WTC11 (cell line): ENCODE measurements at regions of chr10 and their contacts with region 1.

Region 1: GRCh38 chr10:12348870-12349628 is at the start of gene CAMK1D:
- DNase-seq: peak; percentile 84
- ATAC-seq: peak; percentile 57
- H3K4me3 Mint-ChIP-seq: peak within 1 kb of the TSS; percentile 99
- H3K27ac Mint-ChIP-seq: peak within 1 kb of the TSS; percentile 96
- H3K4me1 Mint-ChIP-seq: peaks cover 43% of the 10 kb centered on the region
- H3K27me3 Mint-ChIP-seq: peaks cover 47% of the 10 kb centered on the region
- CTCF ChIP-seq: no peak
- total RNA-seq, gene CAMK1D: 7.9 to 10.2 TPM (median 8.0 TPM) in 3 replicates

Region 2: DNA sequence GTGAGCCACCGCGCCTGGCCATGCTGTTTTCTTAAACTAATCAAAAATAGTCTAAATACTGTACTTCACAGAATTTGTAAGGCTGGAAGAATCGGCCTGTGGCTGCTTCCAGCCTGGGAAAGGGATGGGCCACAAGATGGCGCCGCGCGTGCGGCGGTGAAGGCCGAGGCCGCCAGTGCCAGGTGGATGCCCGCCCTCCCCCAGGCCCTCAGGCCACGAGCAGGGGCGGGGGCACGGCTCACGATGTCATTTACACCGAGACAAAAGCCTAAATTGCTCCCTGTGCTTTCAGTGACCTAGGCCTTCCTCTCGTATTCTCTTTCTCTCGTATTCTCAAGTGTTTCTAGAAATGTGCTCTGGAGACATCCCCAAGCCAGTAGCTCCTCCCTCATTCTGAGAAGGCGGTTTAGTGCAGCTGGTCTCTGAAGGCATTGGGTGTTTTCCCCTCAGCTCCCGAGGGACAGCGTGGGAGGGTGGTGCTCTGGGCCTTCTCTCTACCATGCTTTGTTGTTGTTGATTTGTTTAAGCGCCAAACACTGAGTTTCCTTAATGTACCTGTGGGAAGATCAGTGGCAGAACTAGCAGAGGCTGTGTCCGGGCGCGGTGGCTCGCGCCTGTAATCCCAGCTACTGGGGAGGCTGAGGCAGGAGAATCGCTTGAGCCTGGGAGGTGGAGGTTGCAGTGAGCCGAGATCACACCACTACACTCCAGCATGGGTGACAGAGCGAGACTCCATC is 84.7 kb before region 1 on chr10:
- CTCF ChIA-PET with region 1: interaction called, 18 read pairs
- POLR2A ChIA-PET with region 1: no interaction called
- DNase-seq: peak; percentile 88
- ATAC-seq: peak; percentile 96
- H3K4me3 Mint-ChIP-seq: peak overlapping the region; percentile 60
- H3K27ac Mint-ChIP-seq: peak overlapping the region; percentile 98
- H3K4me1 Mint-ChIP-seq: peaks cover 12% of the 10 kb centered on the region
- H3K27me3 Mint-ChIP-seq: no peaks in the 10 kb centered on the region; the same call in 1 of the 2 replicates
- CTCF ChIP-seq: peak; percentile 46

Region 3: DNA sequence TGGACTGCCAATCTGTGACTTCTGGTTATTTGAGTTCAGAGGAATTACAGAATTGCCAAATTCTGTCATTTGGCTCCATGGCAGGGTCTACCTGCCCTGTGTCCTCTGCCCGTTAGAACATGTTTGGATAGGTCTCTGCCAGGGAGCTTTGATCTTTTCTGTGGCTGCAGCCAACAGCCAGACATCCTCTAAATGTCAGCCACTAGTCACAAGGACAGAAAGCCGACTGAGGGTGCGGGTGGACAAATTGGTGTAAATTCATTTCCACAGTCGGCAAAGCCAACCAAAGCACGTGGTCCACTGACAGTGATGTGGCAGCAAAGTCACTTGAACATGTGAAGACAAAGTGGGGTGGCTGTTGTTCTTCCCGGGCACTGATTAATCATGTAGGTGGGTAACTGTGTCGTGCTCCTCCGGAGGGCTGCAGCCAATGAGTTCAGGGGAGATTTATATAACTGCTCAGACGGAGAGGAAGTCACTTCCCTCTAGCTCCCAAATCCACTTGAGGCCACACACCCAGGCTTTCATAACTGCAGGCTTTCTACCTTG is 26.4 kb before region 1 on chr10:
- CTCF ChIA-PET with region 1: interaction called, 10 read pairs
- POLR2A ChIA-PET with region 1: no interaction called
- DNase-seq: no peak
- ATAC-seq: no peak
- H3K4me3 Mint-ChIP-seq: no peak overlapping the region
- H3K27ac Mint-ChIP-seq: no peak overlapping the region
- H3K4me1 Mint-ChIP-seq: peaks cover 4% of the 10 kb centered on the region; the same call in 1 of the 2 replicates
- H3K27me3 Mint-ChIP-seq: no peaks in the 10 kb centered on the region
- CTCF ChIP-seq: no peak

Region 4: DNA sequence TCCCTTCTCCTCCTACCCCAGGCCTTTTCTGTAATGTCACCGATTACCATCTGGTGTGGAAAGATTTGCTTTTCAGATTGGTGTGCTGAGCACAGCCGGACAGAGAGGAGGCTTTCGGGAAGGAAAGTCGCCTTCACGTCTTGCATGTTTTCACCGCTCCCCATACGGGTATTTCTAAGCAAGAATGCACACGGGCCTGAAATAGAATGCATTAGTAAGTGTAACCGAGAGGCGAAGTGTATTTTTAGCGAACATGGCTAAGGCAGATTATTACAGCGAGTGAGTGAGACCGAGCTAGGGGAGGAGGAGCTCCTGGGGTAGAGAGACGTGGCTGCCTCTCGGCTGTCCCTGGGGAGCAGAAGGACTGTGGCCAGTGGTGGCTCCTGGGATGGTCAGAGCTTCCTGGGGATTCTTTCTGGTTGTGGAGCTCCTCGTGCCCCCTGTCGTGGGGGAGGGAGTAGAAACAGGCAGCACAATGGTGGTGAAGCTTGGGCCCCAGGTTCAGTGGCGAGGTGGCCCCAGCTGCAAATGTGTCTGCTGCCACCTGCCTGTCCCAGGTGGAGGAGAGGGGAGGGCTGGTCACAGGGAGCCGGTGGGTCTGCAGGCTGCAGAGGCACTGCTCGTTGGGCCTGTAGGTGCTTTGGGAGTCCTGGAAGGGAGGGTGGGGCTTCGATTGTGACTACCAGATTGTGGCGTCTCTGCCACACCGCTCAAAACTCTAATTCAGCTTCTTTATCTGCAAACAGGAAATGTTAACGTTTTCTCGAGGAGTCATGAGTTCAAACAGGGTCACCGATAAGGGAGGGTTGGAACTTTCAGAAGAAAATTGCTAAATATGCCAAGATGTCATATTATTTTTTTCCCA is 136.1 kb after region 1 on chr10:
- CTCF ChIA-PET with region 1: interaction called, 11 read pairs
- POLR2A ChIA-PET with region 1: no interaction called
- DNase-seq: peak; percentile 43
- ATAC-seq: peak; percentile 78
- H3K4me3 Mint-ChIP-seq: no peak overlapping the region
- H3K27ac Mint-ChIP-seq: peak overlapping the region; percentile 74
- H3K4me1 Mint-ChIP-seq: peaks cover 44% of the 10 kb centered on the region
- H3K27me3 Mint-ChIP-seq: no peaks in the 10 kb centered on the region; the same call in 1 of the 2 replicates
- CTCF ChIP-seq: no peak

Region 5: GRCh38 chr10:12656518-12657142 is 307.6 kb after region 1 on chr10:
- CTCF ChIA-PET with region 1: interaction called, 11 read pairs
- POLR2A ChIA-PET with region 1: no interaction called
- DNase-seq: no peak
- ATAC-seq: peak; percentile 52
- H3K4me3 Mint-ChIP-seq: no peak overlapping the region
- H3K27ac Mint-ChIP-seq: no peak overlapping the region
- H3K4me1 Mint-ChIP-seq: no peaks in the 10 kb centered on the region
- H3K27me3 Mint-ChIP-seq: no peaks in the 10 kb centered on the region
- CTCF ChIP-seq: peak; percentile 47; the same call in 1 of the 2 replicates